WTC11 (cell line): ENCODE measurements at regions of chr12 and their contacts with region 1.

Region 1: DNA sequence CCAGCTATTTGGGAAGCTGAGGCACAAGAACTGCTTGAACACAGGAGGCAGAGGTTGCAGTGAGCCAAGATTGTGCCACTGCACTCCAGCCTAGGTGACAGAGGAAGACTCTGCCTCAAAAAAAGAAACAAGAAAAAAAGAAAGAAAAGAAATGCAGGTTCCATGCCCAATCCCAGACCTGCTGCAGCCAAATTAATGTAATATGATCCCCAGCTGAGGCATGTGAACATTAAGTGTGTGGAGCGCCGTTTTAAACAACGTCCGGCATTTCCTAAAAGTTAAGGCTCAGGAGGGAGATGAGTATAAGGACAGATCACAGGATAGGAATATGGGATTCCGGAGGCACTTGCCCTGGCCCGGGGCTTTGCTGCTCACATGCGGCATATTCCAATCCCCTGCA is 162.9 kb downstream of the KSR2 start:
- DNase-seq: no peak
- ATAC-seq: no peak
- H3K4me3 Mint-ChIP-seq: no peak overlapping the region
- H3K27ac Mint-ChIP-seq: no peak overlapping the region
- H3K4me1 Mint-ChIP-seq: peaks cover 17% of the 10 kb centered on the region; the same call in 1 of the 2 replicates
- H3K27me3 Mint-ChIP-seq: no peaks in the 10 kb centered on the region
- CTCF ChIP-seq: no peak

Region 2: DNA sequence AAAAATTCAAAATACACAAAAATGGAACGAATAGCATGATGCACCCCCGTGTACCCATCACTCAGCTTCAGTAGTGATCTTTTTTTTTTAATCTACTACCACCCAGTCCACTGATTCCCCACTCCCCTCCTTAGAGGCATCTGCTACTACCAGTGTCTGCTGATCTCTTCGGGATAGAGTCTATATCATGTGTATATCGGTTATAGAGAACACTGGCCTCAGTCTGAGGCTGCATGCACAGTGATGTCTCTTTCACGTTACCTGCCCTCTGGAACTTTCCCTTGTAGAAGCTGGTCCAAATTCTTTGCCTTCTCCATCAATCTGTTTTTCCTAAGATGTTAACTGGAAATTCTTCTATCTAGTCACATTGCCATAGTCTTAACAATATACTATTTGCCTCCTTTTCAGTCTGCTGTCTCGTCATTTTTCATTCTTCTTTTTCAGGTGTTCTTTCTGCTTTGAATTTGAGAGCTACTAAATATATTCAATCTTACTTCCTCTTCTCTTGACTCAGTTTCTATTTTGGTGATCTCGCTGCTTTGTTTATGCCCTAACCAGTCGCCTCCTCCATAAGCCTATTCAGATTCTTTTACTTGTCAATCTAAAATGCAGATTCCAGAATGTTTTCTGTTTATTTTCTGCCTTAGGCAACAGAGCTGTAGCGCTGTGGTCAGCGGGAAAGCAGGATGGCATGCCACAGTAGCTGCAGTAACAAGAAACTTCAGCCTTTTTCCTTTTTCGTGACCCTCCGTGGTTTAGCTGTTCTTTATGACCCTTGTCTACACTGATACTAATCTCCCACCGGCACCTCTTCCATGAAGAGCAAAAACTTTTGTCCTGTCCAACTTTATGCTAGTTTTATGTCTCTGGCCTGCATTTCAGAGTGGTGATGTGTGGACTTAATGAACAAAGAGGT is 828.1 kb before region 1 on chr12:
- CTCF ChIA-PET with region 1: no interaction called
- POLR2A ChIA-PET with region 1: interaction called, 11 read pairs
- DNase-seq: no peak
- ATAC-seq: no peak; the same call in 1 of the 2 replicates
- H3K4me3 Mint-ChIP-seq: no peak overlapping the region
- H3K27ac Mint-ChIP-seq: peak overlapping the region; percentile 48
- H3K4me1 Mint-ChIP-seq: peaks cover 34% of the 10 kb centered on the region
- H3K27me3 Mint-ChIP-seq: no peaks in the 10 kb centered on the region
- CTCF ChIP-seq: no peak

Region 3: DNA sequence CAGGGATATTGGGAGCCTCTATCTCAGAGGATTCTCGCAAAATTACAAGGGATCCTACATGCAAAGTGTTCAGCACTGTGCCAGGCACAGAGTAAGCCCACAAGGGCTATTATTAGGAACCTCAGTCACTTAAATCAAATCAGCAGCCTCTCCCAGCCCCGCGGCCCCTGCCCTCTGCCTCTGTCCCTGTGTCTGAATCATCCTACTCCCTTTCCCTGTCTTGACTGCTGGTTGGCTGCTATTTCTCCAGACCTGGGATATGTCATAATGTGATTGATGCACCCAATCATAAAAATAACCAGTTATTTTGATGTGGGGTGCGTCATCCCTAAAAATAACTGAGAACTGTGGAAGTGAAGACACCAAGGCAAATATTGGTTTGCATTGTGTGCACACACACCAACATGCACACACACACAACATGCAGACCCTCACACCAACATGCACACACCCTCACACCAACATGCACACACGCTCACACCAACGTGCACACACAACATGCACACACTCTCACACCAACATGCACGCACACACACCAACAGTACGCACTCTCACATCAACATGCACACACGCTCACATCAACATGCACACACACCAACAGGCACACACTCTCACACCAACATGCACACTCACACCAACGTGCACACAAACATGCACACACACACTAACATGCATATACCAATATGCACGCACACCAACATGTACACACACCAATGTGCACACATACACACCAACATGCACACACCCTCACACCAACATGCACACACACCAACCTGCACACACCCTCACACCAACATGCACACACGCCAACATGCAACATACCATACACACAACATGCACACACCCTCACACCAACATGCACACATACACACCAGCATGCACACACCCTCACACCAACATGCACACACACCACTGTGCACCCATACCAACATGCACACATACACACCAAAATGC is 13.1 kb before region 1 on chr12:
- CTCF ChIA-PET with region 1: no interaction called
- POLR2A ChIA-PET with region 1: no interaction called
- DNase-seq: no peak
- ATAC-seq: no peak
- H3K4me3 Mint-ChIP-seq: no peak overlapping the region
- H3K27ac Mint-ChIP-seq: no peak overlapping the region
- H3K4me1 Mint-ChIP-seq: peaks cover 44% of the 10 kb centered on the region
- H3K27me3 Mint-ChIP-seq: no peaks in the 10 kb centered on the region
- CTCF ChIP-seq: no peak